Adrenal gland (tissue), 19 donors: ENCODE measurements at regions of chr10 and their contacts with region 1.

Region 1: GRCh38 chr10:101889256-101890210 is 45.9 kb upstream of the KCNIP2 start:
- DNase-seq: peak; percentile 69 to 94 (median 89)
- H3K4me3 ChIP-seq: no peak overlapping the region
- H3K27ac ChIP-seq: no peak overlapping the region
- H3K4me1 ChIP-seq: no peaks in the 10 kb centered on the region
- H3K27me3 ChIP-seq: no peaks in the 10 kb centered on the region
- CTCF ChIP-seq: peak; percentile 77 to 90 (median 83)
- POLR2A ChIP-seq: no peak

Region 2: GRCh38 chr10:102009801-102010425 is 120.4 kb after region 1 on chr10:
- intact Hi-C with region 1: loop called (anchors 1 to 5 kb)
- DNase-seq: peak; percentile 59 to 85 (median 71)
- H3K4me3 ChIP-seq: no peak overlapping the region
- H3K27ac ChIP-seq: no peak overlapping the region
- H3K4me1 ChIP-seq: peaks cover 13 to 18% of the 10 kb centered on the region in 2 donors
- H3K27me3 ChIP-seq: no peaks in the 10 kb centered on the region
- CTCF ChIP-seq: peak; percentile 78 to 98 (median 97)
- POLR2A ChIP-seq: no peak